ENCODE measurements at regions of chr4 and their contacts with region 1.

Region 1: GRCh38 chr4:113434247-113434587 is 327.3 kb downstream of the CAMK2D start:
- DNase-seq: no peak
- H3K4me3 ChIP-seq: no peak overlapping the region
- H3K27ac ChIP-seq: no peak overlapping the region
- H3K4me1 ChIP-seq: peaks cover 9% of the 10 kb centered on the region
- CTCF ChIP-seq: no peak

Region 2: GRCh38 chr4:113444386-113444785 is 10.2 kb after region 1 on chr4:
- CTCF ChIA-PET with region 1: no interaction called
- POLR2A ChIA-PET with region 1: interaction called, 10 read pairs
- intact Hi-C with region 1: no loop called
- DNase-seq: no peak
- H3K4me3 ChIP-seq: no peak overlapping the region
- H3K27ac ChIP-seq: no peak overlapping the region
- H3K4me1 ChIP-seq: no peaks in the 10 kb centered on the region
- CTCF ChIP-seq: no peak